ENCODE measurements at regions of chr3 and their contacts with region 1.

Region 1: GRCh38 chr3:53195602-53196574 is 34.9 kb downstream of the PRKCD start:
- DNase-seq: peak; percentile 20 to 78 (median 47)
- ATAC-seq: peak; percentile 77
- H3K4me3 ChIP-seq: no peak overlapping the region
- H3K4me3 Mint-ChIP-seq: no peak overlapping the region
- H3K27ac ChIP-seq: no peak overlapping the region
- H3K27ac Mint-ChIP-seq: no peak overlapping the region
- H3K4me1 ChIP-seq: peaks cover 4% of the 10 kb centered on the region
- H3K4me1 Mint-ChIP-seq: peaks cover 2% of the 10 kb centered on the region
- H3K27me3 ChIP-seq: no peaks in the 10 kb centered on the region
- H3K27me3 Mint-ChIP-seq: peaks cover 4% of the 10 kb centered on the region
- CTCF ChIP-seq: peak; percentile 94

Region 2: GRCh38 chr3:52742418-52743041 is 453.4 kb before region 1 on chr3:
- CTCF ChIA-PET with region 1: no interaction called
- POLR2A ChIA-PET with region 1: no interaction called
- intact Hi-C with region 1: loop called (anchors 2 to 5 kb)
- DNase-seq: peak in 2 of 9 experiments; percentile 48 to 58
- ATAC-seq: no peak
- H3K4me3 ChIP-seq: no peak overlapping the region
- H3K4me3 Mint-ChIP-seq: no peak overlapping the region
- H3K27ac ChIP-seq: no peak overlapping the region
- H3K27ac Mint-ChIP-seq: no peak overlapping the region
- H3K4me1 ChIP-seq: no peaks in the 10 kb centered on the region
- H3K4me1 Mint-ChIP-seq: no peaks in the 10 kb centered on the region
- H3K27me3 ChIP-seq: no peaks in the 10 kb centered on the region
- H3K27me3 Mint-ChIP-seq: no peaks in the 10 kb centered on the region
- CTCF ChIP-seq: peak; percentile 55

Region 3: DNA sequence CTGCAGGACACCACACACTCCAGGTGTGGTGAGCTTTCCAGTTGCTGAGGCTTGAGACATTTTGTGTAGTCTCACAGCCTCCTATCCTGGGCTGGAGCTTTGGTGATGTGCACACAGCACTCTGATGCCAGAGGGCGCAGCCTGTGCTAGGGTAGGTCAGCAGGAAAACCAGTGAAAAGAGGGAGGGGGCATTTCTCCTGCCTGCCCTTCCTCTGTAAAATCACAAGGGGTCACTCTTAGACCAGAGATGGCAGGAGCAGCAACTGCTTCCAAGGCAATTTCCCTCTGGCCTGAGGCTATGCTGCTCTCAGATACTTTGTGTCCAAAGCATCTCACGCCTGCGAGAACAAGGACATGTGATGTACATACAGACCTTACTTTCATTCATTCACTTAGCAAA is 344.5 kb before region 1 on chr3:
- CTCF ChIA-PET with region 1: interaction called, 3 read pairs
- POLR2A ChIA-PET with region 1: no interaction called
- intact Hi-C with region 1: loop called (anchors 2 to 5 kb)
- DNase-seq: peak in 4 of 9 experiments; percentile 10 to 43 (median 30)
- ATAC-seq: peak; percentile 48
- H3K4me3 ChIP-seq: no peak overlapping the region
- H3K4me3 Mint-ChIP-seq: no peak overlapping the region
- H3K27ac ChIP-seq: no peak overlapping the region
- H3K27ac Mint-ChIP-seq: no peak overlapping the region
- H3K4me1 ChIP-seq: no peaks in the 10 kb centered on the region
- H3K4me1 Mint-ChIP-seq: no peaks in the 10 kb centered on the region
- H3K27me3 ChIP-seq: no peaks in the 10 kb centered on the region
- H3K27me3 Mint-ChIP-seq: no peaks in the 10 kb centered on the region
- CTCF ChIP-seq: no peak

Region 4: DNA sequence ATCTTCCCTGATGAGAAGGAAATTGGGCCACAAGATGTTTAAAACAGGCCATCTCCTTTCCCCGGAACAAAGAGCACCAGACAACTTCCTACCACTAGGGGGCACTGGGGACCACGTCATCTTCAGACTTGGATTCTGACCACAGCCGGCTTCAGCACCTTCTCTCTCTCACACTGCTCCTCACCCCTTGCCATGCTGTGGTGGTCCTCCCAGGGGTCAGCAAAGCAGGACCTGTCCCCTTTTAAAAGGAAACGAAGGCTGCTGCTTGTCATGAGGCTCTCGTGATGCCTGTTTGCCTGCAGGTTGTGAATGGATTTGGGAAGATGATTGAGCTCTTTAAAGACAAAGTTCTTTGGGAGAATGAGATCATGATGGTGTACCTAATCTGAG is 81.9 kb before region 1 on chr3:
- CTCF ChIA-PET with region 1: interaction called, 295 read pairs
- POLR2A ChIA-PET with region 1: no interaction called
- intact Hi-C with region 1: loop called (anchors 1 kb)
- DNase-seq: peak; percentile 67 to 88 (median 84)
- ATAC-seq: peak; percentile 89
- H3K4me3 ChIP-seq: no peak overlapping the region
- H3K4me3 Mint-ChIP-seq: no peak overlapping the region
- H3K27ac ChIP-seq: peak overlapping the region in 1 of 2 experiments; percentile 15
- H3K27ac Mint-ChIP-seq: no peak overlapping the region
- H3K4me1 ChIP-seq: no peaks in the 10 kb centered on the region
- H3K4me1 Mint-ChIP-seq: peaks cover 8% of the 10 kb centered on the region
- H3K27me3 ChIP-seq: no peaks in the 10 kb centered on the region
- H3K27me3 Mint-ChIP-seq: no peaks in the 10 kb centered on the region
- CTCF ChIP-seq: peak; percentile 89

Measured in CD8-positive, alpha-beta T cell (primary cell).